Naive thymus-derived CD4-positive, alpha-beta T cell (primary cell): ENCODE measurements at regions of chrX and their contacts with region 1.

Region 1: GRCh38 chrX:9995855-9996339 is 28.7 kb downstream of the CLDN34 start:
- DNase-seq: peak; percentile 55 to 79 (median 67)
- ATAC-seq: peak; percentile 91
- H3K4me3 ChIP-seq: no peak overlapping the region
- H3K4me3 Mint-ChIP-seq: no peak overlapping the region
- H3K27ac ChIP-seq: no peak overlapping the region
- H3K27ac Mint-ChIP-seq: no peak overlapping the region
- H3K4me1 ChIP-seq: no peaks in the 10 kb centered on the region
- H3K4me1 Mint-ChIP-seq: peaks cover 0 to 17% (median 0%) of the 10 kb centered on the region in 7 donors
- H3K27me3 ChIP-seq: no peaks in the 10 kb centered on the region
- H3K27me3 Mint-ChIP-seq: no peaks in the 10 kb centered on the region

Region 2: GRCh38 chrX:8743126-8743732 is 1252.7 kb before region 1 on chrX:
- CTCF ChIA-PET with region 1: no interaction called
- POLR2A ChIA-PET with region 1: no interaction called
- intact Hi-C with region 1: loop called in 1 of 2 experiments (anchors 10 kb)
- DNase-seq: peak; percentile 23 to 68 (median 43)
- ATAC-seq: no peak
- H3K4me3 ChIP-seq: no peak overlapping the region
- H3K4me3 Mint-ChIP-seq: no peak overlapping the region
- H3K27ac ChIP-seq: no peak overlapping the region
- H3K27ac Mint-ChIP-seq: no peak overlapping the region
- H3K4me1 ChIP-seq: no peaks in the 10 kb centered on the region
- H3K4me1 Mint-ChIP-seq: no peaks in the 10 kb centered on the region
- H3K27me3 ChIP-seq: no peaks in the 10 kb centered on the region
- H3K27me3 Mint-ChIP-seq: peaks cover 0 to 6% (median 4%) of the 10 kb centered on the region in 5 donors

Region 3: GRCh38 chrX:9816094-9816700 is 179.7 kb before region 1 on chrX:
- CTCF ChIA-PET with region 1: no interaction called
- POLR2A ChIA-PET with region 1: no interaction called
- intact Hi-C with region 1: no loop called
- DNase-seq: no peak
- ATAC-seq: no peak
- H3K4me3 ChIP-seq: no peak overlapping the region
- H3K4me3 Mint-ChIP-seq: no peak overlapping the region
- H3K27ac ChIP-seq: no peak overlapping the region
- H3K27ac Mint-ChIP-seq: no peak overlapping the region
- H3K4me1 ChIP-seq: no peaks in the 10 kb centered on the region
- H3K4me1 Mint-ChIP-seq: no peaks in the 10 kb centered on the region
- H3K27me3 ChIP-seq: no peaks in the 10 kb centered on the region
- H3K27me3 Mint-ChIP-seq: peaks cover 0 to 13% (median 6%) of the 10 kb centered on the region in 5 donors

Region 4: GRCh38 chrX:9885150-9885549 is 110.7 kb before region 1 on chrX:
- CTCF ChIA-PET with region 1: no interaction called
- POLR2A ChIA-PET with region 1: no interaction called
- intact Hi-C with region 1: loop called in 1 of 2 experiments (anchors 2 kb)
- DNase-seq: peak in 8 of 9 donors; percentile 8 to 42 (median 26)
- ATAC-seq: peak; percentile 79
- H3K4me3 ChIP-seq: no peak overlapping the region
- H3K4me3 Mint-ChIP-seq: no peak overlapping the region
- H3K27ac ChIP-seq: no peak overlapping the region
- H3K27ac Mint-ChIP-seq: no peak overlapping the region
- H3K4me1 ChIP-seq: no peaks in the 10 kb centered on the region
- H3K4me1 Mint-ChIP-seq: peaks cover 0 to 13% (median 0%) of the 10 kb centered on the region in 7 donors
- H3K27me3 ChIP-seq: no peaks in the 10 kb centered on the region
- H3K27me3 Mint-ChIP-seq: peaks cover 0 to 6% (median 0%) of the 10 kb centered on the region in 5 donors

Region 5: DNA sequence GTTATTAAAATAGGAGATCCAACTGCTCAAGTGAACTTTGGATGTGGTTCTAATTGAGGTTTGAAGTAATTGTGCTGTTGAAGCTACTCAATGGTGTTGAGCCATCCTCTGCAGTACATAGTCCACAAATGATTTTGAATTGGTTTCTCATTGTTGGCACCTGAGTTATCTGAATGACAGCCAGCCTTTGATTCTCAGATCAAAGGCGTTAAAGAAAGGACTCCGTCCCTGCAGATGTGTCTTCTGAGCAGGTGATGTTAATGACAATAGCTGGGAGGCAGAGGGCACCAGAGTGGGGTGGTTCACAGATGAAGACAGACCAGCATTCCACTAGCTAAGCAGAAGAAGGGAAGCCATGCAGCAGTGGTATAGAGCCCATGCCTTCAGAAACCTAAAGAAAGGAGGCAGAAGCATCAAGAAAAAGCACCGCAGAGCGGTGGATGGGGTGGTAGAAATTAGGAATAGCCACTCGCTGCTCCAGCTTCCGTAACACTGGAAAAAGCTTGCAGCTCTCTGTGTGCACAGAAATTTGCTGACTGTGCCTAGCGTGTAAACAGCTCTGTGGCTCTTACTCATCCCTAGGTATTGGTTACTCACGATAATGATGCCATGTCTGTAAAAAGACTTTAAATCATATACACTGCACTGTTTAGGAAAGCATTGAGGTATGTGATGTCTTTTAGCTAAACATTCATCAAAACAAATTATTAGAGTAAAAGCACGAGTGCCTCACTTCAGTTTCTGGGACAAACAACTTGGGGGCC is 81.7 kb after region 1 on chrX:
- CTCF ChIA-PET with region 1: no interaction called
- POLR2A ChIA-PET with region 1: no interaction called
- intact Hi-C with region 1: loop called in 1 of 2 experiments (anchors 1 kb)
- DNase-seq: peak in 4 of 9 donors; percentile 23 to 47 (median 28)
- ATAC-seq: no peak
- H3K4me3 ChIP-seq: no peak overlapping the region
- H3K4me3 Mint-ChIP-seq: no peak overlapping the region
- H3K27ac ChIP-seq: no peak overlapping the region
- H3K27ac Mint-ChIP-seq: peak overlapping the region in 3 of 9 donors; percentile 14 to 80 (median 66)
- H3K4me1 ChIP-seq: peaks cover 4 to 5% of the 10 kb centered on the region in 2 donors
- H3K4me1 Mint-ChIP-seq: peaks cover 0 to 18% (median 11%) of the 10 kb centered on the region in 7 donors
- H3K27me3 ChIP-seq: no peaks in the 10 kb centered on the region
- H3K27me3 Mint-ChIP-seq: no peaks in the 10 kb centered on the region

Region 6: DNA sequence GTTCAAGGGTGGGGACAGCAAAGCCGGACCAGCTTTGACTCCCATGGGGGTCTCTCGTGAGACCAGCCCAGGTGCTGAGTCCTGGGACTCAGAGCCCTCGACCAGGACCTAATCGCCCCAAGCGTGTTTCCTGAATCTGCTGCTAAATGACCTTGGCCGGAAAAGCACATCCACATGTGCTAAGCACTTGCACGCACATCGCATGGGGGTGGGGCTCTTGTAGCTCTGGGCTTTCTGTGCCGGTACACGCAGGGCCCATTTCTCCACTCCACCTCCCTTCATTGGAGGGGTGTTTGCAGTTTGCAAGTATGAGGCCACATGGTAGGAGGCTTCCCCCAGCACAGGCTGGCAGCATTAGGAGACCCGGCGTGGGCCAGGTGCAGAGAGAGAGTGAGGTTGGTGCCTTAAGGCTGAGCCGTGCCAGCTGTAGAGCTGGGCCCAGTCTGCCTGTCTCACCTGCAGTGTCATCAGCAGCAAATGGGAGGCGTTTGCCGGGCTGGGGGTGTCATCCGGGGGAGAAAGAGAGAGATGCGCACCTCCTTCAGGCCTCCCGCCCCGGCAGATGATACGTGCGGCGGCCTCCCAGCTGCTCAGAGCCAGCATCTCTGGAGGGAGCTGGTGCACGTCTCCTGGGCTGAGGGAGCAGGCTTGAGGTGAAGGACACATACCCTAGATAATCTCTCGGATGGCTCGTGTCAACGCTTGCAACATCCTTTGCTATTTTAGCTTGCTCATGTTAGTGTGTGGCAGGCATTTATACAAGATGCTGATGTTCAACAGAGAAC is 115.7 kb after region 1 on chrX:
- CTCF ChIA-PET with region 1: interaction called, 51 read pairs
- POLR2A ChIA-PET with region 1: no interaction called
- intact Hi-C with region 1: loop called in 1 of 2 experiments (anchors 1 kb)
- DNase-seq: peak; percentile 12 to 81 (median 73)
- ATAC-seq: peak; percentile 84
- H3K4me3 ChIP-seq: peak overlapping the region; percentile 56
- H3K4me3 Mint-ChIP-seq: peak overlapping the region; percentile 65 to 90 (median 85)
- H3K27ac ChIP-seq: peak overlapping the region; percentile 81
- H3K27ac Mint-ChIP-seq: peak overlapping the region; percentile 96 to 100 (median 98)
- H3K4me1 ChIP-seq: peaks cover 61% of the 10 kb centered on the region in 2 donors
- H3K4me1 Mint-ChIP-seq: peaks cover 14 to 64% (median 62%) of the 10 kb centered on the region in 7 donors
- H3K27me3 ChIP-seq: no peaks in the 10 kb centered on the region
- H3K27me3 Mint-ChIP-seq: no peaks in the 10 kb centered on the region